Colonic mucosa (tissue), 4 donors: ENCODE measurements at regions of chr17 and their contacts with region 1.

Region 1: DNA sequence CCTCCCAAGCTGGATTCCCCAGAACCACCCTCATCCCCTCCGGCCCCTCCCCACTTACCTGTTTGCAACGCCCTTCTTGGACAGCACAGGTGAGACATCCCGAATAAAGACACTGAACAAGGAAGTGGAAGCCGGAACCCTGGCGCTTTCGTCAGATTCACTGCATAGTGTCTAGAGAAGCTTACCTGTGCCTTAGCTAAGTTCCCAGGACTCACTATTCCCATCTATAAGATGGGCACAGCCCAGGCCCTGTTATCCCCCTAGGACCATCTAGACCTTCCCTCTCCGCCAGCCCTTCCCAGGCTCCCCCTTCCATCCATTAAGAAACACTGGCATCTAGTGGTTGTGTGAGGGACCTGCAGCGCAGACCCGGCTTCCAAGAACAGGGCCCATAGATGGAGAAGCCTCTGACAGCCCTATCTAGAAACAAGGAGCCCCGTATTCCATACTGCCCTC is 26.9 kb upstream of the RPL38 start:
- DNase-seq: peak; percentile 64
- H3K4me3 ChIP-seq: no peak overlapping the region
- H3K27ac ChIP-seq: no peak overlapping the region
- H3K4me1 ChIP-seq: no peaks in the 10 kb centered on the region
- H3K27me3 ChIP-seq: peaks cover 4% of the 10 kb centered on the region
- CTCF ChIP-seq: peak; percentile 66

Region 2: DNA sequence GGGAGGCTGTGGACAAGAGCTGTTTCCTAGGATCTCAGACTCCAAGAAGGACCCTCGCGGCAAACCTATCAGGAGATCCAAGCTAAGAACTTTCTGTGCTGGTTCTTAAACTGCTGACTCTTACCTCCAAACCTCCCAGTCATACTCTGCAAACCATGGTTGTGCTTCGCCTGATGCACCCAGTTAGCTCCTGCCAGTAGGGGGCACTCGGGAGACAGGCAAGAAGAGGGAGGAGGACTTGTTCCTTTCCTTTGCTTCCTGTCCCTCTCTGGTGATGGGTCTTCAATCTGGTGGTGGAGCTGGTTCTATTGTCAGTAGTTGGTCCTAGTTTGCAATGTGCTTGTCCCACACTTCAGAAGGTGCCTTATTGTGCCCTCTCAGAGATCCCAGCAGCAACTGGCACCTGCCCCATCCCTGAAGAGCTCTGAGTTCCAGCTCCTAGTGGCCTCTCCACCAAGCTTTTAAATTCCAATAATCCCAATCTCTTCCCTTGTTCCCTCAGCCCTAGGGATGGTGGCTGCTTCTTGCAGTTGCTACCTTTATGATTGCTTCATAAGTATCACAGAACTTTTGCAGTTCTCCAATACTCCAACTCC is 86.6 kb before region 1 on chr17:
- intact Hi-C with region 1: loop called (anchors 2 kb)
- DNase-seq: peak; percentile 81
- H3K4me3 ChIP-seq: no peak overlapping the region
- H3K27ac ChIP-seq: no peak overlapping the region
- H3K4me1 ChIP-seq: no peaks in the 10 kb centered on the region
- H3K27me3 ChIP-seq: no peaks in the 10 kb centered on the region
- CTCF ChIP-seq: peak; percentile 69

Region 3: DNA sequence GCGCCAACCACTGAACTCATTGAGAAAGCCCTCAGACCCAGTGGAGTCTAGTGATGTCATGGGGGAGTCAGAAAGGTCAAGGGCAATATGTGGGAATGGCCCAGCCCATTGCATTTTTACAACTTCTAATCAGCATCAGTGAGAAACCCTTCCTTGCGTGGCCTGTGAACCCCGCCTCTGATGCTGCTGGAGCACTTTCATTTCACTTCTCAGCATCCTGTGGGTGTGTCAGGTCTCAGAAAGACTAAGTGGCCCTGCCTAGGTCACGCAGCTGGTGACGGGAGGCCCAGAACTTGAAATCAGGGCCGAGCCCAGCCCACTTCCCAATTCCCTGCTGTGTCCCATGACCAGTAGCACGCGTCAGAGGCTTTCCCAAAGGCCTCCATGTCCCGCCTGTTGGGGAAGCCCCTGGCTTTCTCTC is 103.5 kb after region 1 on chr17:
- intact Hi-C with region 1: no loop called
- DNase-seq: no peak
- H3K4me3 ChIP-seq: no peak overlapping the region
- H3K27ac ChIP-seq: no peak overlapping the region
- H3K4me1 ChIP-seq: no peaks in the 10 kb centered on the region
- H3K27me3 ChIP-seq: no peaks in the 10 kb centered on the region
- CTCF ChIP-seq: no peak